ENCODE measurements at regions of chr16 and their contacts with region 1.

Region 1: GRCh38 chr16:89815639-89816348 is 653 bp downstream of the FANCA start:
- DNase-seq: no peak
- ATAC-seq: no peak; the same call in 2 of the 3 replicates
- H3K4me3 ChIP-seq: peak overlapping the region; percentile 71 to 91 (median 87)
- H3K27ac ChIP-seq: peak overlapping the region; percentile 96
- H3K4me1 ChIP-seq: peaks cover 57% of the 10 kb centered on the region
- H3K27me3 ChIP-seq: no peaks in the 10 kb centered on the region; a peak in 1 of 5 replicates
- CTCF ChIP-seq: no peak
- EP300 ChIP-seq: no peak
- POLR2A ChIP-seq: no peak
- RAD21 ChIP-seq: no peak

Region 2: DNA sequence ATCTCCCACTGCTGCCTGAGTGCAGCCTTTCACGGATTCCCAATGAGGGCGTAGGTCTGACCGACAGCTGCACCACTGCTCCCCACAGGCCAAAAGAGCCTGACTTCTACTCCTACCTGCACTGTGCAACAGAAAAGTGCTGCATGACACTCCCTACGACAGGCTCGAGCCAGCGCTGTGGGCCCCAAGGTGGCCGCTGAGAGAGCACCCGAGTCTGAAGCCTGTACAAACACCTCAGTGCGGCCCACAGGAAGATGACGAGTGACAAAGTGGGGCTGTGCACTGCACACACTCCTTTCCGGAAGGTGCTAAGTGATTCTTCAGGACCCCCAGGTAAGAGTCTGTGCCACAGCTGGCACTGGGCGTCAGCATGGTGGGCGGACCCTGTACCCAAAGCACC is 40.6 kb before region 1 on chr16:
- CTCF ChIA-PET with region 1: no interaction called
- POLR2A ChIA-PET with region 1: no interaction called
- in situ Hi-C with region 1: no loop called
- intact Hi-C with region 1: no loop called
- DNase-seq: no peak
- ATAC-seq: no peak
- H3K4me3 ChIP-seq: no peak overlapping the region
- H3K27ac ChIP-seq: no peak overlapping the region
- H3K4me1 ChIP-seq: no peaks in the 10 kb centered on the region
- H3K27me3 ChIP-seq: no peaks in the 10 kb centered on the region
- CTCF ChIP-seq: no peak
- EP300 ChIP-seq: no peak
- POLR2A ChIP-seq: no peak
- RAD21 ChIP-seq: no peak

Region 3: DNA sequence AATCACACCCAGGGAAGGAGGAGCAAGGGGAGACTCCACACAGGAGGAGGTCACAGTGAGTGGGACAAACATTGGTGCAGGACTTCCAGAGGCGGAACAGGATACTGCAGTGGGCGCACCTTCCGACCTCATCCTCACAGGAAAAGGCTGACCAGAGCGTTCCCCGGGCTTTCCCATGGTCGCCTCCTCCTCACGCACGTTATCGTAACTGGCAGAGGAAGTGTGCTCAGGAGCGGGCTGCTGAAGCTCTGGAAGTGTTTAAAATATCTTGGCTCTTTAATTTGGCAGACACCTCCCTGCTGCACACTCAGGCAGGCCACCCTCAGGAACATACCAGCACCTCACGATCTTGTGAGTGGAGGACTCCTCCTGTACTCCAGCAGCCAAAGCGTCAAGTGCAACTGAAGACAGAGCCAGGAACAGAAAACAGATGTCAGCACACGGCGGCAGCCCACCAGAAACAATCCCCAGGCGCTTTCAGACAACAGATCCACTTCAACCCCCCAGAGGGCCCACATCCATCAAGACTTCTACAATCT is 16.9 kb before region 1 on chr16:
- CTCF ChIA-PET with region 1: no interaction called
- POLR2A ChIA-PET with region 1: no interaction called
- in situ Hi-C with region 1: no loop called
- intact Hi-C with region 1: no loop called
- DNase-seq: no peak
- ATAC-seq: peak; percentile 25; the same call in 2 of the 3 replicates
- H3K4me3 ChIP-seq: no peak overlapping the region
- H3K27ac ChIP-seq: no peak overlapping the region
- H3K4me1 ChIP-seq: no peaks in the 10 kb centered on the region
- H3K27me3 ChIP-seq: no peaks in the 10 kb centered on the region
- CTCF ChIP-seq: no peak
- EP300 ChIP-seq: no peak
- POLR2A ChIP-seq: no peak
- RAD21 ChIP-seq: no peak

Region 4: DNA sequence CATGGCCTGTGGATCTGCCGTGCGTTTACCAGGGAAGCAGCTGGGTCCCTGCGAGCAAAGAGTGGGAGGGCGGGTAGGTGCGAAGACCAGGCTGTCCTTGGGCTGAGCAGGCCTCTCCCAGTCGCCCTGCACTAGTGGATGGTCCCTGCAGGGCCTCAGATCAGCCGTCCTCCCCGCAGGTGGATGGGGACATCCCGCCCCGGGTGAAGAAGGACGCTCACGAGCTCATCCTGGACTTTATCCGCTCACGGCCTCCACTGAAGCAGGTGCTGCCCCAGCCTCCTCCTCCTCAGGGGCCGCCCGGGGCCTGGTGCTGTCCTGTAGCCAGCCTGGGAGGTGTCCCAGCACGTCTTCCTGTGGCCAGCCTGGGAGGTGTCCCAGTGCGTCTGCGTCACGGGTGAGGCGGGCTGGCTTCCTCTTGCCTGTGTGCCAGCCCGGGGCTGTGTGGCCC is 39.7 kb after region 1 on chr16:
- CTCF ChIA-PET with region 1: interaction called, 9 read pairs
- POLR2A ChIA-PET with region 1: interaction called, 6 read pairs
- in situ Hi-C with region 1: loop called (anchors 5 kb)
- intact Hi-C with region 1: no loop called
- DNase-seq: no peak
- ATAC-seq: no peak
- H3K4me3 ChIP-seq: no peak overlapping the region
- H3K27ac ChIP-seq: no peak overlapping the region
- H3K4me1 ChIP-seq: no peaks in the 10 kb centered on the region
- H3K27me3 ChIP-seq: no peaks in the 10 kb centered on the region
- CTCF ChIP-seq: no peak
- EP300 ChIP-seq: no peak
- POLR2A ChIP-seq: no peak
- RAD21 ChIP-seq: no peak

Measured in HepG2 (cell line).